Calu3 (cell line): ENCODE measurements at regions of chr4 and their contacts with region 1.

Region 1: GRCh38 chr4:54961357-54961975 is 163.9 kb downstream of the KDR start:
- DNase-seq: peak; percentile 12
- H3K4me3 Mint-ChIP-seq: no peak overlapping the region
- H3K27ac Mint-ChIP-seq: no peak overlapping the region
- H3K4me1 Mint-ChIP-seq: no peaks in the 10 kb centered on the region
- H3K27me3 Mint-ChIP-seq: peaks cover 11% of the 10 kb centered on the region
- CTCF ChIP-seq: peak; percentile 44

Region 2: GRCh38 chr4:54322818-54323417 is 638.5 kb before region 1 on chr4:
- CTCF ChIA-PET with region 1: no interaction called
- intact Hi-C with region 1: loop called (anchors 2 kb)
- DNase-seq: peak; percentile 67
- H3K4me3 Mint-ChIP-seq: no peak overlapping the region
- H3K27ac Mint-ChIP-seq: no peak overlapping the region
- H3K4me1 Mint-ChIP-seq: no peaks in the 10 kb centered on the region
- H3K27me3 Mint-ChIP-seq: no peaks in the 10 kb centered on the region
- CTCF ChIP-seq: peak; percentile 40

Region 3: DNA sequence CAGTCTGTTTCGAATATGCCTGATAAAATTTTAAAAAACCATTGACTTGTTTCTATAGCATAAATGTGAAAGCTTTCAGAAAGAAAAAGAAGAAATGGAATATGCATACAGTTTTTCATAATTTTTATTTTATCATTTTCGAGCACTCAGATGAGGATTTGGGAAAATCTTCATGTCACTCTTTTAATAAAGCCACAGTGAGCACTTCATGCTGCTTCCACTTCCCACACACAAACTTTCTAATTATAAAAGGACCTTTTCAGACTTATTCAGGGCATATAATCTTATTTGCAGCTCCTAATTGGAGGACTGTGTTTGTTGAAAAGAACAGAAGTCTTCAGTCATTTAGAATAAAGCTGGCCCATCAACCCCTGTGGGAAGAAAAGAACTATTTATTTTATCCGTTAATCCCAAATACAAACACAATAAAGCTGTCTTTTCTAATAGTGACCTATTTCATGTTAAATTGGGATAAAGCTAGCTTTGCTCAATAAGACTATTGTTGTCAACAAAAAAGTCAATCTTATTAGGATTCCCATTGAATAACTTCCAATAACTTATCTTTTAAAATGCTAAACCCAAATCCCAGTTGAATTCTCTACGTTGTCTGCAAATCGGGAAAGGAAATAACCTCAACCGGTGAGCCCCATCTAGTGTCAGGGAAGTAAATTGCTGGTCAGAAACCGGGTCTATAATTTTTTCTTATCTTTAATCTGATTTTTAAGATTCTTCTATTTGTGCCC is 520.9 kb before region 1 on chr4:
- CTCF ChIA-PET with region 1: no interaction called
- intact Hi-C with region 1: loop called (anchors 5 kb)
- DNase-seq: peak; percentile 19
- H3K4me3 Mint-ChIP-seq: no peak overlapping the region
- H3K27ac Mint-ChIP-seq: no peak overlapping the region
- H3K4me1 Mint-ChIP-seq: no peaks in the 10 kb centered on the region
- H3K27me3 Mint-ChIP-seq: peaks cover 50% of the 10 kb centered on the region
- CTCF ChIP-seq: no peak

Region 4: GRCh38 chr4:54683616-54684346 is 277.7 kb before region 1 on chr4:
- CTCF ChIA-PET with region 1: interaction called, 3 read pairs
- intact Hi-C with region 1: loop called (anchors 2 kb)
- DNase-seq: peak; percentile 51
- H3K4me3 Mint-ChIP-seq: no peak overlapping the region
- H3K27ac Mint-ChIP-seq: no peak overlapping the region
- H3K4me1 Mint-ChIP-seq: no peaks in the 10 kb centered on the region
- H3K27me3 Mint-ChIP-seq: no peaks in the 10 kb centered on the region
- CTCF ChIP-seq: peak; percentile 41

Region 5: DNA sequence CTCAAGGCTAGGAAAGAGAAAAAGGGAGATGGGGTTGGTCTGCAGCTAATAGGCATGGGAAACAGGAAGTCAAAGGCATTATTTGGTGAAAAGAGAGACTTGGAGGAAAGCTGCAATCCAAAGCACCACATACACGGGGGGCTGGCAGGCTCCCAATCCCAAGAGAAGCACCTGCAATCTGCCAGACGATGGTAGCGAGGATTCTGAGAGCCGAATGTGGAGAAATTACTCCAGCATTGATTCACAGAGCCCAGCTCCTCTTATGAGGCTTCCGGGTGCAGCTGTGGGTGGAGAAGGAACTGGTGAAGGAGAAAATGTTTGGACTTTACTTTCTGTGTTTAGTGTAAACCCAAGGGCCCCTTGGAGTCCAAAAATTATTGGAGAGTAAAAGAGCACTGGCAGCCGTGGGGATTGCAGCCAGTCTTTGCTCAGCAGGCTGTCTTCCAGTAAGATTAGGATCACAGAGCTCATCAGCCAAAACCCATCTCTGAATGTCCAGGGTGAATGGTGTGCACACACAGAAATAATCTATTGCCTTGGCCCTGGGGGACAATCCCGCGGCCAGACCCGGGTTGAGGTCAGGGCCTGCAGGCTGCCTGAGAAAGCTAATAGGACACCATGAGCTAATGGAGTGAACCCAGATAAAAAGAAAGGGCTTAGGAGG is 106.1 kb before region 1 on chr4:
- CTCF ChIA-PET with region 1: no interaction called
- intact Hi-C with region 1: loop called (anchors 10 kb)
- DNase-seq: no peak
- H3K4me3 Mint-ChIP-seq: no peak overlapping the region
- H3K27ac Mint-ChIP-seq: no peak overlapping the region
- H3K4me1 Mint-ChIP-seq: no peaks in the 10 kb centered on the region
- H3K27me3 Mint-ChIP-seq: peaks cover 41% of the 10 kb centered on the region
- CTCF ChIP-seq: no peak

Region 6: GRCh38 chr4:55517526-55518229 is 556.2 kb after region 1 on chr4:
- CTCF ChIA-PET with region 1: no interaction called
- intact Hi-C with region 1: no loop called
- DNase-seq: no peak
- H3K4me3 Mint-ChIP-seq: no peak overlapping the region
- H3K27ac Mint-ChIP-seq: no peak overlapping the region
- H3K4me1 Mint-ChIP-seq: no peaks in the 10 kb centered on the region
- H3K27me3 Mint-ChIP-seq: no peaks in the 10 kb centered on the region
- CTCF ChIP-seq: no peak